Activated CD4-positive, alpha-beta memory T cell treated with anti-CD3 and anti-CD28 coated beads, Interleukin-2, amount 10 ng/mL, durations not matched to agents 7 days and 5 days (primary cell): ENCODE measurements at regions of chrX and their contacts with region 1.

Region 1: GRCh38 chrX:123859846-123860838 is at the start of gene XIAP:
- DNase-seq: peak; percentile 75
- H3K4me3 Mint-ChIP-seq: peak within 1 kb of the TSS; percentile 88
- H3K27ac Mint-ChIP-seq: peak within 1 kb of the TSS; percentile 94
- H3K4me1 Mint-ChIP-seq: peaks cover 22% of the 10 kb centered on the region
- H3K27me3 Mint-ChIP-seq: no peaks in the 10 kb centered on the region
- total RNA-seq, gene XIAP: 47.6 to 53.3 TPM

Region 2: DNA sequence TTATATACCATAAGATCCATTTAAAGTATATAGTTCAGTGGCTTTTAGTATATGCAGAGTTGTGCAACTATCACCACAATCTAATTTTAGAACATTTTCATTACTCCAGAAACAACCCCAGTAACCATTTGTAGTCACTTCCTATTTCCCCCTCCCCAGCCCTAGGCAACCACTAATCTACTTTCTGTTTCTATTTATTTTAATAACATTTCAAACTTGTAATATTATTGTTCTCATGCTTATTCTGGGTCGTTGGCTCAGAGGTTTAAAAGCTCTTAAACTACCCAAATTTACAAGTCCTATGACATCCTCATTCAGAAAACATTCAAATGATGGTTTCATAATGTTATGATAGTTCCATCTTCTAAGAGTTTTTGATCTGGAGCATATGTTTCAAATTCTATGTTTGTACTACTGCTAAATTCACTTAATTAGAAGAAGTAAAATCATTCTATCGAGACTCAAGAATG is 18.1 kb after region 1 on chrX:
- CTCF ChIA-PET with region 1: interaction called, 5 read pairs
- POLR2A ChIA-PET with region 1: interaction called, 12 read pairs
- DNase-seq: no peak
- H3K4me3 Mint-ChIP-seq: peak overlapping the region; percentile 55
- H3K27ac Mint-ChIP-seq: peak overlapping the region; percentile 79
- H3K4me1 Mint-ChIP-seq: peaks cover 35% of the 10 kb centered on the region
- H3K27me3 Mint-ChIP-seq: no peaks in the 10 kb centered on the region